MCF 10A (cell line): ENCODE measurements at regions of chr6 and their contacts with region 1.

Region 1: DNA sequence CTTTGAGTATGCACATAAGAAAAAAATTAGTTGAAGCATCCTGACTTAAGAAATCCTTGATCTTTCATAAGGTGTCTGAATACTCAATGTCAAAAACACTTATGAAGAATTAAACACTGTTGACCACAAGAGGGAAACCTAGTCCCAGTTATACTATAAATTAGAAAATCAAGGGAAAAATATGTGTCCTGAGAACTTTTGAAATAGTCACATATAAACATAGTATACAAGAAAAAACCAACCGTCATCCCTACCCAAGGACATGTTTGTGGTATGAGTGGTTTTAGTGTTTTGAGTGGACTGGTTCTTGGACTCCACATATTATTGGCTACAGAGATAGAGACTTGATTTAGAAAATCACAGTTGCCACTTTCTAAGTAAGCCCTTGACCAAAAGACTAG is 7.6 kb upstream of the HLA-DRA start:
- DNase-seq: peak; percentile 35
- H3K4me3 Mint-ChIP-seq: no peak overlapping the region
- H3K27ac Mint-ChIP-seq: no peak overlapping the region
- H3K4me1 Mint-ChIP-seq: no peaks in the 10 kb centered on the region
- H3K27me3 Mint-ChIP-seq: peaks cover 60% of the 10 kb centered on the region
- CTCF ChIP-seq: peak; percentile 35

Region 2: DNA sequence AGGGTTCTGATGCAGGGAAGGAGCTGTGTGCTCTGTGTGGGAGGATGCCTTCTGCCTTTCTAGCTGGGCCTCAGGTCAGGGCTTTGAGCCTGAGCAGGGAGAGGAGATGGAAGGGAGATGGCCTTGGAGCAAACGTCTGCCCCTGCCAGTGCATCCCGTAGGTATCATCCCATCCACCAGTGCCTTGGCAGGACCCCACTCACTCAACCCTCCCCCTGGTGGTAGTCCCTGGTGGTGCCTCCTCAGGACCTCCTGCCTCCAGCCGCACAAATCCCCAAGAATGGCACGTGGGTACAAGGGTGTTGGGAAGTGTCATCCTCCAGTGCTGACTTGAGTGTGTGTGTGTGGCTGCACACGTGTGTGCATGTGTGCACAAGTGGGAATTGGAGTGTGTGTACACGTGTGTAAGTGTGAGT is 957.2 kb before region 1 on chr6:
- CTCF ChIA-PET with region 1: no interaction called
- POLR2A ChIA-PET with region 1: no interaction called
- intact Hi-C with region 1: no loop called
- DNase-seq: no peak
- H3K4me3 Mint-ChIP-seq: no peak overlapping the region
- H3K27ac Mint-ChIP-seq: peak overlapping the region; percentile 72
- H3K4me1 Mint-ChIP-seq: peaks cover 19% of the 10 kb centered on the region
- H3K27me3 Mint-ChIP-seq: no peaks in the 10 kb centered on the region
- CTCF ChIP-seq: no peak

Region 3: GRCh38 chr6:32271429-32271828 is 160.6 kb before region 1 on chr6:
- CTCF ChIA-PET with region 1: no interaction called
- POLR2A ChIA-PET with region 1: no interaction called
- intact Hi-C with region 1: no loop called
- DNase-seq: no peak
- H3K4me3 Mint-ChIP-seq: no peak overlapping the region
- H3K27ac Mint-ChIP-seq: no peak overlapping the region
- H3K4me1 Mint-ChIP-seq: no peaks in the 10 kb centered on the region
- H3K27me3 Mint-ChIP-seq: peaks cover 44% of the 10 kb centered on the region
- CTCF ChIP-seq: no peak

Region 4: DNA sequence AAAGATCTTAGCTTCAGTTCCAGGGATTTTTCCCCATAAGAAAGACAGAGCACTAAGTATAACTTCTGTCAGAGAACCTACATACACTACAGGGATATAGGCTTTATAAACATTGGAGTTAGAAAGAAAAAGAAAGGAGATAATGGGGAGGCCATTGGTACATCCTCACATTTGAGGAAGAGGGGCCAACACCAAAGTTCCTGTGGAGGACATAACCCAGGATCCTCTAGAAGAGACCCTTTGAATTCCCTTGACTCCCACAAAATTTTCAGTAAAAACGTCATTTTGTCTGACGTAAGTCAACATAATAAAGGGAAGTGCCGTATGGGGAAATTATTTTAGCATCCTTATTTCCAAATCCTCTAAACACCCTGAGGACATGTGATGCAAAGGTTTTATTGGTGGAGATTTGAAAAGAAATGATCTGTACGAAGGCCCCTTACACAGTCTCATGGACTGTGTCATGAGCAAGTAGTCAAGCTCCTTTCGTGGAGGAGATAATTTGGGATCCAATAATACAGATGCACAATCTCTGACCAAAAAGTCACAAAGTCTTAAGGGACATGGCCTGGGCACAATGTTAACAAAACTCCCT is 40.8 kb after region 1 on chr6:
- CTCF ChIA-PET with region 1: no interaction called
- POLR2A ChIA-PET with region 1: no interaction called
- intact Hi-C with region 1: no loop called
- DNase-seq: no peak
- H3K4me3 Mint-ChIP-seq: no peak overlapping the region
- H3K27ac Mint-ChIP-seq: no peak overlapping the region
- H3K4me1 Mint-ChIP-seq: no peaks in the 10 kb centered on the region
- H3K27me3 Mint-ChIP-seq: peaks cover 68% of the 10 kb centered on the region
- CTCF ChIP-seq: no peak

Region 5: GRCh38 chr6:32622545-32623401 is 190.7 kb after region 1 on chr6:
- CTCF ChIA-PET with region 1: no interaction called
- POLR2A ChIA-PET with region 1: no interaction called
- intact Hi-C with region 1: loop called (anchors 5 kb)
- DNase-seq: peak; percentile 37
- H3K4me3 Mint-ChIP-seq: no peak overlapping the region
- H3K27ac Mint-ChIP-seq: no peak overlapping the region
- H3K4me1 Mint-ChIP-seq: peaks cover 7% of the 10 kb centered on the region
- H3K27me3 Mint-ChIP-seq: peaks cover 12% of the 10 kb centered on the region
- CTCF ChIP-seq: no peak

Region 6: DNA sequence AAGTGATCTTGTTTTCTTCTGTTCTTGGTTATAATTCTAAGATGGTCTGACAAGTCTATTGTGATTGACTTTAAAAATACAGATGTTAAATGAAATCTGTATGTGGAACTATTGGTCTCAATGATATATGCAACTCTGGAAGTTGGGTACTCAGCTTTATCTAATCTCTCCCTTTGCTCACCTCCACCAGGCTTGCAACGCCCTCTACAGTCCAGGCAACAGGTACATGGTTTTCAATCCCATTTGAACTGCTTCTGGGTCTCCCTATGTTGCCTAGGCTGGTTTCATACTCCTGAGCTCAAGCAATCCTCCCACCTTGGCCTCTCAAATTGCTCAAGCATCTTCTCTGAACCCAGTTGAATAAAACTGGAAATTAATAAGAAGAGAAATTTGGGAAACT is 260.0 kb after region 1 on chr6:
- CTCF ChIA-PET with region 1: no interaction called
- POLR2A ChIA-PET with region 1: no interaction called
- intact Hi-C with region 1: loop called (anchors 1 kb)
- DNase-seq: peak; percentile 42
- H3K4me3 Mint-ChIP-seq: no peak overlapping the region
- H3K27ac Mint-ChIP-seq: no peak overlapping the region
- H3K4me1 Mint-ChIP-seq: no peaks in the 10 kb centered on the region
- H3K27me3 Mint-ChIP-seq: peaks cover 79% of the 10 kb centered on the region
- CTCF ChIP-seq: peak; percentile 21

Region 7: DNA sequence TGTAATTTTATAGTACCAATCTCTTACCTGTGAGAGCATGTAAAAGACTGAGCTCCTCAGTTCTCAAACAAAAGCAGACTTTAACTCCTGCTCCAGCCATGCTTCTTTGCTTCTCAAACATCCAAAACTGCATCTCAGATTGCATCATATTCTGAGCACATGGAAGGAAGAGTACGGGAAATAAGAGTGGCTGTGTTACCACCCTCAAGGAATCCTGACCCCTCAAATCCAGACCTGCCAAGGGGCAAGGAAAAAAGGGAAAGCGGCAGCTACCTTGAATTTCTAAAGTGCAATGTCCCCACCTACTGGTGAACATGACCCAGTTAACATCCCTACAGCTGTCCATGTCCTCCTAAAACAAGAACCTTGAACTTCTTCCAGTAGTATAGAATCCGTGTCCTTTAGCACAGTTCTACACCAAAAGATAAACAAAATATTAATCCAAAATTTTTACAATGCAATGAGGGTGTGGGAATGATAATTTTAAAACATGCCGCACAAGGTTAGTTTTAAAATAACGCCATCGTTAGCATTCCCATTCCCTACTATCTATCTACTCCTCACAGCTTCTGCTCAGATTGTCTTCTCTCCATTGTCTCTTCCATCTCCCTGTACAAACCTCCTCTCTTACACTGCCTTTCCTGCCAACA is 268.5 kb after region 1 on chr6:
- CTCF ChIA-PET with region 1: interaction called, 9 read pairs
- POLR2A ChIA-PET with region 1: no interaction called
- intact Hi-C with region 1: loop called (anchors 1 kb)
- DNase-seq: peak; percentile 73
- H3K4me3 Mint-ChIP-seq: no peak overlapping the region
- H3K27ac Mint-ChIP-seq: no peak overlapping the region
- H3K4me1 Mint-ChIP-seq: no peaks in the 10 kb centered on the region
- H3K27me3 Mint-ChIP-seq: peaks cover 89% of the 10 kb centered on the region
- CTCF ChIP-seq: peak; percentile 45

Region 8: DNA sequence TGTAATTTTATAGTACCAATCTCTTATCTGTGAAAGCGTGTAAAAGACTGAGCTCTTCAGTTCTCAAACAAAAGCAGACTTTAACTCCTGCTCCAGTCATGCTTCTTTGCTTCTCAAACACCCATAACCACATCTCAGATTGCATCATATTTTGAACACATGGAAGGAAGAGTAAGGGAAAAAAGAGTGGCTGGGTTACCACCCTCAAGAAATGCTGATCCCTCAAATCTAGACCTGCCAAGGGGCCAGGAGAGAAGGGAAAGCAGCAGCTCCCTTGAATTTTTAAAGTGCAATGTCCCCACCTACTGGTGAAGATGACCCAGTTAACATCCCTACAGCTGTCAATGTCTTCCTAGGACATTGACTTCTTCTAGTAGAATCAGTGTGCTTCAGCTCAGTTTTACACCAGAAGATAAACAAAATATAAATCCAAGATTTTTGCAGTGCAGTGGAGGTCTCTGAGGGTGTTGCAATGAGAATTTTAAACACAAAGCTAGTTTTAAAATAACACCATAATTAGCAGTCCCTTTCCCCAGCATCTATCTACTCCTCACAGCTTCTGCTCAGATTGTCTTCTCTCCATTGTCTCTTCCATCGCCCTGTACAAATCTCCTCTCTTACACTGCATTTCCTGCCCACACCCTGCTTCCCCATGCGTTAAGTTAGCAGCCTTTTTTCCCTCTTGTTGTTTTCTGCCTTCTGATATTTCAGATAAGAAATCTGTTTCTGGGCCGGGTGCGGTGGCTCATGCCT is 353.9 kb after region 1 on chr6:
- CTCF ChIA-PET with region 1: interaction called, 24 read pairs
- POLR2A ChIA-PET with region 1: interaction called, 3 read pairs
- intact Hi-C with region 1: loop called (anchors 1 kb)
- DNase-seq: peak; percentile 65
- H3K4me3 Mint-ChIP-seq: no peak overlapping the region
- H3K27ac Mint-ChIP-seq: no peak overlapping the region
- H3K4me1 Mint-ChIP-seq: no peaks in the 10 kb centered on the region
- H3K27me3 Mint-ChIP-seq: peaks cover 95% of the 10 kb centered on the region
- CTCF ChIP-seq: peak; percentile 64